CD8-positive, alpha-beta memory T cell (primary cell): ENCODE measurements at regions of chr1 and their contacts with region 1.

Region 1: GRCh38 chr1:212665241-212666115 is 34.2 kb downstream of the BATF3 start:
- DNase-seq: peak; percentile 64 to 76 (median 71)
- H3K4me3 ChIP-seq: peak overlapping the region; percentile 50
- H3K4me3 Mint-ChIP-seq: peak overlapping the region; percentile 12 to 78 (median 71)
- H3K27ac ChIP-seq: no peak overlapping the region
- H3K27ac Mint-ChIP-seq: peak overlapping the region in 1 of 8 donors; percentile 50
- H3K4me1 ChIP-seq: peaks cover 8% of the 10 kb centered on the region
- H3K4me1 Mint-ChIP-seq: peaks cover 9 to 25% (median 14%) of the 10 kb centered on the region in 3 donors
- H3K27me3 ChIP-seq: no peaks in the 10 kb centered on the region
- H3K27me3 Mint-ChIP-seq: peaks cover 0 to 3% of the 10 kb centered on the region in 2 donors

Region 2: GRCh38 chr1:212558693-212559480 is 106.6 kb before region 1 on chr1:
- CTCF ChIA-PET with region 1: no interaction called
- POLR2A ChIA-PET with region 1: no interaction called
- DNase-seq: peak; percentile 87 to 94 (median 89)
- H3K4me3 ChIP-seq: peak overlapping the region; percentile 61
- H3K4me3 Mint-ChIP-seq: peak overlapping the region; percentile 64 to 93 (median 86)
- H3K27ac ChIP-seq: peak overlapping the region; percentile 78
- H3K27ac Mint-ChIP-seq: peak overlapping the region; percentile 55 to 98 (median 97)
- H3K4me1 ChIP-seq: peaks cover 10% of the 10 kb centered on the region
- H3K4me1 Mint-ChIP-seq: peaks cover 9 to 14% (median 13%) of the 10 kb centered on the region in 3 donors
- H3K27me3 ChIP-seq: no peaks in the 10 kb centered on the region
- H3K27me3 Mint-ChIP-seq: peaks cover 0 to 10% of the 10 kb centered on the region in 2 donors

Region 3: GRCh38 chr1:212643877-212644276 is 21.6 kb before region 1 on chr1:
- CTCF ChIA-PET with region 1: no interaction called
- POLR2A ChIA-PET with region 1: no interaction called
- DNase-seq: no peak
- H3K4me3 ChIP-seq: no peak overlapping the region
- H3K4me3 Mint-ChIP-seq: peak overlapping the region in 1 of 7 donors; percentile 6
- H3K27ac ChIP-seq: no peak overlapping the region
- H3K27ac Mint-ChIP-seq: no peak overlapping the region
- H3K4me1 ChIP-seq: no peaks in the 10 kb centered on the region
- H3K4me1 Mint-ChIP-seq: no peaks in the 10 kb centered on the region
- H3K27me3 ChIP-seq: peaks cover 10% of the 10 kb centered on the region
- H3K27me3 Mint-ChIP-seq: peaks cover 11 to 33% of the 10 kb centered on the region in 2 donors

Region 4: DNA sequence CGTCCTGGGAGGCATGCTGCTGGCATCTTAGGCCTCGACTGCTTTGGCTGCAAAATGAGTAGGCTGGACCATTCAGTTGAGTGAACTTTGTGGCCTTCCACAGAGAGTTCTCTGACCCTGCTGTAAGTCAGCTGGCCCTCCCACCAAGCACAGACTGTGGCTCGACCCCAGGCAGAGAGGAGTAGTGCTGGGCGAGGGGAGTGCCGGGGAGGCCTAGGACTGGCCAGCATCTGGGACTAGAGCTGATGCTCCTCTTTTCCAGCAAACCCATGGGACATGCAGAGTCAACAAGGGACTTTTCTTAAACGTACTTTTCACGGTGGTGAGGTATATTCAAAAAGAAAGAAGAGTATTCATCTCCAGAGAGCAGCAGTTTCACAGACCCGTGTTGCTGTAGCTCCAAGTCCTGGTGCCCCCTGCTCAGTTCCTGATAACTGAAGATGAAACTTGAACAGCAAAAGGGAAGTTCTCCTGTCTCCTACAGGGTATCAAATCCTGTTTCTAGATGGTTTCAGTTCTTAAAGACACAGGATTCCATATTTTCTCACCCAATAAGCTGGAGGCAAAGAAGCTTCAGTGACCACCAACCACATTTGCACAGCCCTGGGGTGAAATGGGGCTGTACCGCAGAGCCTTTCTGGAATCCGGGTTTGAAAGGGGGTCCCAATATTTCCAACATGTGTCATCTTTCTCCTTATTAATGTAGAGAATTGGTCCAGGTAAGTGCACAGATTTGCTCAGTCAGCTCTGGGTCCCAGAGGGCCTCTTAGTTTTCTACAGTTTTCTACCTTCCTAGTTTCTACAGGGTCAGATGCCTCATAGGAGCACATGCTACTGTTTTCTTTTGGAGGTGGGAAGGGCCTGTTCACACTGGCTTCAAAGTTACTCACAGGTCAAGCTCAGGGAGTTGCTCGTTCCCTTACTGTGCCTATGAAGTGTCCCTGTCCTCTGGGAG is 13.3 kb after region 1 on chr1:
- CTCF ChIA-PET with region 1: interaction called, 16 read pairs
- POLR2A ChIA-PET with region 1: no interaction called
- DNase-seq: no peak
- H3K4me3 ChIP-seq: no peak overlapping the region
- H3K4me3 Mint-ChIP-seq: no peak overlapping the region
- H3K27ac ChIP-seq: no peak overlapping the region
- H3K27ac Mint-ChIP-seq: peak overlapping the region in 1 of 8 donors; percentile 9
- H3K4me1 ChIP-seq: peaks cover 9% of the 10 kb centered on the region
- H3K4me1 Mint-ChIP-seq: peaks cover 15 to 48% (median 29%) of the 10 kb centered on the region in 3 donors
- H3K27me3 ChIP-seq: no peaks in the 10 kb centered on the region
- H3K27me3 Mint-ChIP-seq: peaks cover 0 to 1% of the 10 kb centered on the region in 2 donors

Region 5: DNA sequence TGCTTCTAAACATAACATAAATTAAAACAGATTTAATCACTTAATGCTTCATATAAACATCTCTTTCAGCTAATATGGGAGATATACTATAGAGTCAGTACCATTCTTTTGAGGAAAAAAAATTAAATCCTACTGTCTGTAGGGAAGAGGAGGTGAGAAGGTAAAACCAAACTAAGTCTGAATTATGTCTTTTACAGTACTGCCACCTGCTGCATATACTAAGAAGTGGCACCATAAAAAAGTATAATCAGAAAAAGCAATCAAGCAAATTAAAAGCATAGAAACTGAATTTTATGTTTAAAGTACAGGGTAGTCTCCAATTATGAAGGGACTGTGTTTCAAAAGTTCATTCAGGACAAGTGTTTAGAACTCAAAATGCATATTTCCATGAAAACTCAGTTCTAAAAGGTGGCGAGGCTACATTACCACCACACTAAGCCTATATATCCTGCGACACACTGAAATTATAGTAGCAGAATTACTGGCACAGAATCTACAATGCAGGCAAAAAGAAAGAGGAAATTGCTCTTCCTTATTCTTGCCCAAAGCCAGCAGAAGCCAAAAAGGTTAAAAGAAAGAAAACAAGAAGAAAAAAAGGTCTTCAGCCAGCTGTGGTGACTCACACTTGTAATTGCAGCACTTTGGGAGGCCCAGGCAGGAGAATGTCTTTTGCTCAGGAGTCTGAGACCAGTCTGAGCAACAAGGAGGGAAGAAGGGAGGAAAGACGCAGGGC is 117.1 kb after region 1 on chr1:
- CTCF ChIA-PET with region 1: interaction called, 27 read pairs
- POLR2A ChIA-PET with region 1: no interaction called
- DNase-seq: peak in 2 of 5 donors; percentile 6 to 23
- H3K4me3 ChIP-seq: no peak overlapping the region
- H3K4me3 Mint-ChIP-seq: peak overlapping the region in 1 of 7 donors; percentile 33
- H3K27ac ChIP-seq: no peak overlapping the region
- H3K27ac Mint-ChIP-seq: peak overlapping the region in 3 of 8 donors; percentile 12 to 75 (median 46)
- H3K4me1 ChIP-seq: no peaks in the 10 kb centered on the region
- H3K4me1 Mint-ChIP-seq: peaks cover 3 to 16% (median 6%) of the 10 kb centered on the region in 3 donors
- H3K27me3 ChIP-seq: no peaks in the 10 kb centered on the region
- H3K27me3 Mint-ChIP-seq: no peaks in the 10 kb centered on the region

Region 6: GRCh38 chr1:212994926-212995325 is 329.4 kb after region 1 on chr1:
- CTCF ChIA-PET with region 1: interaction called, 27 read pairs
- POLR2A ChIA-PET with region 1: no interaction called
- DNase-seq: no peak
- H3K4me3 ChIP-seq: no peak overlapping the region
- H3K4me3 Mint-ChIP-seq: no peak overlapping the region
- H3K27ac ChIP-seq: no peak overlapping the region
- H3K27ac Mint-ChIP-seq: no peak overlapping the region
- H3K4me1 ChIP-seq: no peaks in the 10 kb centered on the region
- H3K4me1 Mint-ChIP-seq: peaks cover 4 to 9% (median 6%) of the 10 kb centered on the region in 3 donors
- H3K27me3 ChIP-seq: no peaks in the 10 kb centered on the region
- H3K27me3 Mint-ChIP-seq: no peaks in the 10 kb centered on the region